OCI-LY7 (cell line): ENCODE measurements at regions of chr1 and their contacts with region 1.

Region 1: GRCh38 chr1:200302192-200302920 is 107.5 kb downstream of the ZNF281 start:
- DNase-seq: peak; percentile 61
- H3K4me3 ChIP-seq: peak overlapping the region; percentile 66
- H3K27ac ChIP-seq: no peak overlapping the region
- H3K4me1 ChIP-seq: peaks cover 58% of the 10 kb centered on the region
- CTCF ChIP-seq: peak; percentile 55

Region 2: DNA sequence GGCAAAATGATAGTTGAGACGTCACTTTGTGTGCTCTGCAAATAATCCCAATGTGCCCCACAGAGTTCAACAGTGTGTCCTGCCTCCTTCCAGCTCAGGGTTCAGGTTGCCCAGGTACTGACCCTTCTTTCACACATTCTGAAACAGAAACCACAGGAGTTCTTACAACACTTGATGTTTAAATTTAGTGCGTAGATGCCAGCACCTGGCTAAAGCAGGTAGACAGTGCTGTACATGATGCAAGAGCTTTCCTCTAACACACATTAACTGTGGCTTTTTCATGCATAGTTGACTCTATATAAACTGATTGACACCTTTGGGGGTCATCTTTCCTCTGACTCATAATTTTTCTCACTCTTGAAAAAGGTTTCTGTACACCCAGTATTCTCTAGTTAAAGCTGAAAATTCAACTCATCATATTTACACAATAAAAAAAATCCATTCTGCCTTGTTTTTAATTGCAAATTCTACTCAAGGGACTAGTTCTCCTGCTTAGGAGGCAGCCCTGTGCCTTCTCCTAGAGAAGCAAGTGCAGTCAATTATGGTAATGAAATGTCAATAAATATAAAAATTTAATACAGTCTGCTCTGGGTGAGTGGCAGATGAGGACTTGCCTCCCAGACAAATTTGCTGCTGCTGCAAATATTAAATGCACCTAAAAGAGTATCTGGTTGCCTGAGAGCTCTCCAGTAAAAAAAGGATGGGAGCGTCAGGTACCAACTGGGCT is 183.4 kb before region 1 on chr1:
- CTCF ChIA-PET with region 1: no interaction called
- POLR2A ChIA-PET with region 1: no interaction called
- intact Hi-C with region 1: no loop called
- DNase-seq: peak; percentile 42
- H3K4me3 ChIP-seq: no peak overlapping the region
- H3K27ac ChIP-seq: peak overlapping the region; percentile 24
- H3K4me1 ChIP-seq: peaks cover 19% of the 10 kb centered on the region
- CTCF ChIP-seq: no peak

Region 3: GRCh38 chr1:200139661-200140250 is 162.6 kb before region 1 on chr1:
- CTCF ChIA-PET with region 1: no interaction called
- POLR2A ChIA-PET with region 1: no interaction called
- intact Hi-C with region 1: loop called (anchors 2 kb)
- DNase-seq: peak; percentile 82
- H3K4me3 ChIP-seq: no peak overlapping the region
- H3K27ac ChIP-seq: no peak overlapping the region
- H3K4me1 ChIP-seq: peaks cover 8% of the 10 kb centered on the region
- CTCF ChIP-seq: peak; percentile 97

Region 4: DNA sequence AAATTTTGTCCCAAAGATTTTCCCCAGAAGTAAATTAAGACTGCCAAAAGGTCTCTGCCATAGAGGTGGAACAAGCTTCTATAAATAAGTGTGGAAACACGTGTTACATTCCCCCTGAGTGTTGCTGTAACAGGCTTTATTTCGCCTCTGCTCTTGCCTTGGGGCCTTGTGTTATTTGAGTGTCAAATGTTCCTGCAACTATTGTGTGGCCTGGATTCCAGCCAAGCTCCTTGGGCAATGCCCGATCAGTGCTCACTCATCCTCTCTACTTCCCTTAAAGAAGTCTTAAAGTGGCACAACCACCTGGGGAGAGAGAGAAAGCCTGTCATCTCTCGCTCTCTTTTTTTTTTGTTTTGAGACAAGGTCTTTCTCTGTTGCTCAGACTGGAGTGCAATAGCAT is 118.2 kb before region 1 on chr1:
- CTCF ChIA-PET with region 1: no interaction called
- POLR2A ChIA-PET with region 1: no interaction called
- intact Hi-C with region 1: no loop called
- DNase-seq: no peak
- H3K4me3 ChIP-seq: no peak overlapping the region
- H3K27ac ChIP-seq: no peak overlapping the region
- H3K4me1 ChIP-seq: no peaks in the 10 kb centered on the region
- CTCF ChIP-seq: no peak

Region 5: DNA sequence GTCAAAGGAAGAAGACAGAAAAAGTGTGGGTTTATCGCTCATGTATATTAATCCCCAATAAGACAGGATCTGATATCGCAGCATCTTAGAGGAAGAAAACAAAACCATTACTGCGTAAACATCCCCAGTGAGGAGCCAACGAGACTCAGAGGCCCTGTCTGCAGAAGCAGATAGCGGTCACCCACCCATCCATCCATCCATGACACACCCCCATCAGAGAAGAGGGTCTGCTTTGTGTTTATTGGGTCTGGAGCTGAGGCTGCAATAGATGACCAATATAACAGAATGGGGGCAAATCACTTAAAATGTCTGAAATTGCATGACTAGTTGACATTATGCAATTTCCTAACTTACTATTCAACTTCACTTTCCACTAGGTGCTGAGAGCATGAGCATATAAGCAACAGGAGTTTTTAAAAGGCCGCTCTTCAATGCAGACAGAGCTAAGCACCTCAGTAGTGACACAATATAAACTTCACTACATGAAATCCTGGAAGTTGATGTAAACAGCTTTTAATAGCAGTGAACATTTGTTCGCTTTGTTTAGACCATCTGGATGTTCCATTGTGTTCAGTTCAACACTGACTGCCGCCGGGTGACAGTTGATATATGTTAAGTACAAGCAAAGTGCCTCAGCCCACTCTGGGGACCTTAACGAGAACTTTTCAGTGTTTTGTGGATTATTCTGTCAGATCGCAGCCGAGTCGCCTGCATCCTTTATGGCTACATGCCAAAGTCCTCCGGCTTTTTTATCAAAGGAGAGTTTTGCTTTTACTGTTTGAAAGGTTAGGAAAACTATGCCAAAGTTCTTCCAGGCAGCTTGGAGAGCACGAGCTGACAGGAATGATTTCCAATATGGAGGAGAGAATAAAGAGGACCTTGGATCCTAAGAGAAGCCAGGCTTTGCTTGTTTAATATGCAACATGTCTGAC is 60.0 kb before region 1 on chr1:
- CTCF ChIA-PET with region 1: no interaction called
- POLR2A ChIA-PET with region 1: no interaction called
- intact Hi-C with region 1: no loop called
- DNase-seq: no peak
- H3K4me3 ChIP-seq: no peak overlapping the region
- H3K27ac ChIP-seq: no peak overlapping the region
- H3K4me1 ChIP-seq: no peaks in the 10 kb centered on the region
- CTCF ChIP-seq: no peak

Region 6: GRCh38 chr1:200290010-200290685 is 12.2 kb before region 1 on chr1:
- CTCF ChIA-PET with region 1: no interaction called
- POLR2A ChIA-PET with region 1: interaction called, 11 read pairs
- intact Hi-C with region 1: loop called (anchors 1 kb)
- DNase-seq: peak; percentile 53
- H3K4me3 ChIP-seq: no peak overlapping the region
- H3K27ac ChIP-seq: no peak overlapping the region
- H3K4me1 ChIP-seq: peaks cover 57% of the 10 kb centered on the region
- CTCF ChIP-seq: peak; percentile 61

Region 7: DNA sequence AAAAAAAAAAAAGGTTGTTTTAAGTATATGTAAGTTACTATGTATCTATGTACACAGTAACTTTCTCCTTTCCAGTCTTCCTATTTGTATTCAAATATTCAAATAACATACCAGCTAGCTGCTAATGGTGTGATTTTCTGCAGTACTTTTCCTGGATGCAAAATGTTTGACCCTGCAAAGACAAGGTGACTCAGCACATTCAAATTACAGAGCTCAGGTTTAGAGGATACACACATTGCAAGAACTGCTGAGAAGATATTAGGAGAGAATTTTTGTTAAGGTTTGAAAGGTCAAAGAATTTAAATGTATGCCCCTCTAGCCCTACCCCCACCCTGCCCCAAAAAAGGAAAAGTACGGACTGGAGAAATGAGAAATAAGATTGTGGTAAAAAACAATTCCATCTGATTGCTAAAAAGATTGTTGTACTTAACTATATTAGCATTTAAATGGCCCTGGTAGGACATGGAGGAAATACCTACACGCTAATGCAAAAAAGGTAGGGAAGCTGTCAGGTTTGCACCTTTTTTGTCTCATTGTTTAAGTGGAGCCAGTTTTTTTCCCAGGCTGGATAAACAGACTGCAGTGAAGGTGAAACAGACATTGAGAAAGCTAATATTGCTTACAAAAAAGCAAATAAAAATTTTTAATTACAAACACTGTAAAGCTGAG is 61.9 kb after region 1 on chr1:
- CTCF ChIA-PET with region 1: no interaction called
- POLR2A ChIA-PET with region 1: no interaction called
- intact Hi-C with region 1: no loop called
- DNase-seq: no peak
- H3K4me3 ChIP-seq: no peak overlapping the region
- H3K27ac ChIP-seq: no peak overlapping the region
- H3K4me1 ChIP-seq: peaks cover 37% of the 10 kb centered on the region
- CTCF ChIP-seq: no peak

Region 8: GRCh38 chr1:200409761-200410565 is 107.6 kb after region 1 on chr1 and contains the start of gene ZNF281:
- CTCF ChIA-PET with region 1: interaction called, 3 read pairs
- POLR2A ChIA-PET with region 1: no interaction called
- intact Hi-C with region 1: loop called (anchors 5 kb)
- DNase-seq: peak; percentile 96
- H3K4me3 ChIP-seq: peak within 1 kb of the TSS; percentile 97
- H3K27ac ChIP-seq: peak within 1 kb of the TSS; percentile 79
- H3K4me1 ChIP-seq: peaks cover 50% of the 10 kb centered on the region
- CTCF ChIP-seq: no peak
- total RNA-seq, gene ZNF281: 22.9 and 24.2 TPM in 2 replicates